ENCODE measurements at regions of chr18 and their contacts with region 1.

Region 1: DNA sequence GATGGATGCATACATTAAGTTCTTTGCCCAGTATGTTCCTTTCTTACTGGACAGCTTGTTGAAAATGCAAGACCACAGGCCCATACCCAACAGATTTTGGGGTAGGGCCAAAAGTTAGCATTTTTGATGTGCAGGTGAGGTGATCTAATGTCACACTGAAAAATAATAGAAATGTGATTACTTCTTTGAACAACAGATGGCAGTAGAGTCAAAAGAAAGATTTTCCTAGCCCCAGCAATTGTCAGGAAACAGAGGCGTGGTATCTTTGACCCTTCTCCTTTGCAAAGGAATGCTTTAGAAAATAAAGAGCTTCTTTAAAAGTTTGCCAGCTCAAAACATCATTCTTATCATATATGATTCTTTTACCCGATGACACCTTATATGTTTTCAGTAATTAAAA is 343.6 kb upstream of the SYT4 start:
- DNase-seq: peak; percentile 5
- ATAC-seq: peak; percentile 72
- H3K4me3 ChIP-seq: no peak overlapping the region
- H3K27ac ChIP-seq: no peak overlapping the region
- H3K4me1 ChIP-seq: no peaks in the 10 kb centered on the region
- H3K27me3 ChIP-seq: no peaks in the 10 kb centered on the region
- CTCF ChIP-seq: peak; percentile 66
- POLR2A ChIP-seq: no peak
- RAD21 ChIP-seq: peak; percentile 78

Region 2: GRCh38 chr18:43571078-43571689 is 49.8 kb before region 1 on chr18:
- CTCF ChIA-PET with region 1: no interaction called
- POLR2A ChIA-PET with region 1: no interaction called
- dilution Hi-C with region 1: no loop called
- in situ Hi-C with region 1: no loop called
- intact Hi-C with region 1: no loop called
- DNase-seq: peak; percentile 47
- ATAC-seq: peak; percentile 75; the same call in 1 of the 2 replicates
- H3K4me3 ChIP-seq: no peak overlapping the region
- H3K27ac ChIP-seq: no peak overlapping the region
- H3K4me1 ChIP-seq: no peaks in the 10 kb centered on the region
- H3K27me3 ChIP-seq: no peaks in the 10 kb centered on the region
- CTCF ChIP-seq: peak; percentile 74
- POLR2A ChIP-seq: no peak
- RAD21 ChIP-seq: peak; percentile 61

Region 3: GRCh38 chr18:44098551-44099098 is 477.7 kb after region 1 on chr18:
- CTCF ChIA-PET with region 1: no interaction called
- POLR2A ChIA-PET with region 1: no interaction called
- dilution Hi-C with region 1: no loop called
- in situ Hi-C with region 1: no loop called
- intact Hi-C with region 1: loop called (anchors 10 kb)
- DNase-seq: peak; percentile 17
- ATAC-seq: peak; percentile 77; the same call in 1 of the 2 replicates
- H3K4me3 ChIP-seq: no peak overlapping the region
- H3K27ac ChIP-seq: no peak overlapping the region
- H3K4me1 ChIP-seq: no peaks in the 10 kb centered on the region
- H3K27me3 ChIP-seq: no peaks in the 10 kb centered on the region
- CTCF ChIP-seq: no peak
- POLR2A ChIP-seq: no peak
- RAD21 ChIP-seq: no peak

Region 4: GRCh38 chr18:44679056-44679905 is 1058.3 kb after region 1 on chr18:
- CTCF ChIA-PET with region 1: no interaction called
- POLR2A ChIA-PET with region 1: no interaction called
- dilution Hi-C with region 1: no loop called
- in situ Hi-C with region 1: no loop called
- intact Hi-C with region 1: loop called (anchors 10 kb)
- DNase-seq: peak; percentile 81
- ATAC-seq: peak; percentile 97
- H3K4me3 ChIP-seq: peak overlapping the region; percentile 75
- H3K27ac ChIP-seq: peak overlapping the region; percentile 87
- H3K4me1 ChIP-seq: peaks cover 3% of the 10 kb centered on the region; the same call in 1 of the 2 replicates
- H3K27me3 ChIP-seq: peaks cover 21% of the 10 kb centered on the region
- CTCF ChIP-seq: peak; percentile 72
- POLR2A ChIP-seq: peak; percentile 29; the same call in 1 of the 2 replicates
- RAD21 ChIP-seq: peak; percentile 64

Region 5: GRCh38 chr18:45212181-45213039 is 1591.5 kb after region 1 on chr18:
- CTCF ChIA-PET with region 1: interaction called, 4 read pairs
- POLR2A ChIA-PET with region 1: no interaction called
- dilution Hi-C with region 1: no loop called
- in situ Hi-C with region 1: no loop called
- intact Hi-C with region 1: loop called (anchors 10 kb)
- DNase-seq: peak; percentile 74
- ATAC-seq: peak; percentile 95
- H3K4me3 ChIP-seq: no peak overlapping the region
- H3K27ac ChIP-seq: no peak overlapping the region
- H3K4me1 ChIP-seq: no peaks in the 10 kb centered on the region
- H3K27me3 ChIP-seq: peaks cover 2% of the 10 kb centered on the region
- CTCF ChIP-seq: peak; percentile 100
- POLR2A ChIP-seq: 0 out of 2 replicates have a peak, but pooled peaks have one; percentile 37
- RAD21 ChIP-seq: peak; percentile 94